ENCODE measurements at regions of chr2 and their contacts with region 1.

Region 1: GRCh38 chr2:7044261-7045250 is 127.3 kb downstream of the RNF144A start:
- DNase-seq: peak; percentile 16
- ATAC-seq: peak; percentile 84
- H3K4me3 ChIP-seq: no peak overlapping the region
- H3K27ac ChIP-seq: no peak overlapping the region
- H3K4me1 ChIP-seq: no peaks in the 10 kb centered on the region
- H3K27me3 ChIP-seq: no peaks in the 10 kb centered on the region
- CTCF ChIP-seq: peak; percentile 89 to 98 (median 98); a peak in 5 of 6 replicates
- EP300 ChIP-seq: no peak
- POLR2A ChIP-seq: no peak
- RAD21 ChIP-seq: peak; percentile 73

Region 2: GRCh38 chr2:6826081-6826913 is 218.3 kb before region 1 on chr2:
- CTCF ChIA-PET with region 1: interaction called, 13 read pairs
- POLR2A ChIA-PET with region 1: no interaction called
- RAD21 ChIA-PET with region 1: no interaction called
- SMC1A ChIA-PET with region 1: no interaction called
- in situ Hi-C with region 1: no loop called
- intact Hi-C with region 1: loop called (anchors 1 kb)
- DNase-seq: peak; percentile 58
- ATAC-seq: peak; percentile 97
- H3K4me3 ChIP-seq: no peak overlapping the region
- H3K27ac ChIP-seq: no peak overlapping the region
- H3K4me1 ChIP-seq: no peaks in the 10 kb centered on the region
- H3K27me3 ChIP-seq: no peaks in the 10 kb centered on the region
- CTCF ChIP-seq: peak; percentile 67 to 86 (median 70)
- EP300 ChIP-seq: peak in 1 of 2 experiments; percentile 19; a peak in 1 of 4 replicates
- POLR2A ChIP-seq: no peak
- RAD21 ChIP-seq: peak; percentile 74

Region 3: DNA sequence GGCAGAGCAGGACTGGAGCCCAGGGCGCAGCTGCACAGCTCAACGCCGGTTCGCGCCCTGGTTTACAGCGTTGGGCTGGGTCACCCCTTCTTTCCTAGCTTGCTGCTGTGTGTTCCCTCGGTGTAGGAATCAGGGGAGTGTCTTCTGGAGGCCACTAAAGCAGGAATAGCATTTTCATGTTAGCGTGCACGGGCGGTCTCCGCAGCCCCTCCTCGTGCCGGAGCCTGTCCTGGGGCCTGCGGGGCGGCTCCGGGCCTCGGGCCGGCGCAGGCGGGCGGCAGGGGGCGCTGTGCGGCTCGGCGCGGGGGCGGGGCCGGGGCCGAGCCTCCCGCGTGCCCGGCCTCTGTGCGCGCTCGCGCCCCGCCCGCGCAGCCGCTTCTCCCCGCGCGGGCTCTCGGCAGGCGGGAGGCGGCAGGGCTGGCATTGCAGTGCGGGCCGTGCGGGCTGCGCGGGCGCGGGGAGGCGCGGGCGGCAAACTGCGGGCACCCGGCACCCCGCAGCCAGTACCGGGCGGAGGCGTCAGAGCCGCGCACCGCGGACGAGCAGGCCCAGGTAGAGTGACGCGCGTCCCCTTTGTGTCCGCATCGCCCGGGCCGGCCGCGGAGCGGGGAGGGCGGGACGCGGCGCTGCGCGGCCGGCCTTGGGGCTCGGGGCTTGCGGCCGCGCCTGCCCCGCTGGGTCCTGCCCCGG is 127.3 kb before region 1 on chr2 and contains the start of gene RNF144A:
- CTCF ChIA-PET with region 1: interaction called, 25 read pairs
- POLR2A ChIA-PET with region 1: no interaction called
- RAD21 ChIA-PET with region 1: interaction called, 5 read pairs
- SMC1A ChIA-PET with region 1: interaction called, 5 read pairs
- in situ Hi-C with region 1: no loop called
- intact Hi-C with region 1: no loop called
- DNase-seq: no peak
- ATAC-seq: peak; percentile 87
- H3K4me3 ChIP-seq: peak within 1 kb of the TSS; percentile 78
- H3K27ac ChIP-seq: no peak within 1 kb of the TSS
- H3K4me1 ChIP-seq: peaks cover 10% of the 10 kb centered on the region; the same call in 1 of the 2 replicates
- H3K27me3 ChIP-seq: no peaks in the 10 kb centered on the region
- CTCF ChIP-seq: peak in 2 of 3 experiments; percentile 33 to 52; a peak in 3 of 6 replicates
- EP300 ChIP-seq: no peak
- POLR2A ChIP-seq: 0 out of 2 replicates have a peak, but pooled peaks have one; percentile 37
- RAD21 ChIP-seq: 0 out of 2 replicates have a peak, but pooled peaks have one; percentile 25
- polyA plus RNA-seq, gene RNF144A: 0.02 to 0.09 TPM

Region 4: GRCh38 chr2:7014174-7014640 is 30.3 kb before region 1 on chr2:
- CTCF ChIA-PET with region 1: interaction called, 36 read pairs
- POLR2A ChIA-PET with region 1: no interaction called
- RAD21 ChIA-PET with region 1: interaction called, 5 read pairs
- SMC1A ChIA-PET with region 1: interaction called, 12 read pairs
- in situ Hi-C with region 1: no loop called
- intact Hi-C with region 1: no loop called
- DNase-seq: no peak
- ATAC-seq: peak; percentile 86
- H3K4me3 ChIP-seq: no peak overlapping the region
- H3K27ac ChIP-seq: no peak overlapping the region
- H3K4me1 ChIP-seq: no peaks in the 10 kb centered on the region
- H3K27me3 ChIP-seq: no peaks in the 10 kb centered on the region; a peak in 1 of 4 replicates
- CTCF ChIP-seq: peak; percentile 37 to 61 (median 58); a peak in 5 of 6 replicates
- EP300 ChIP-seq: no peak
- POLR2A ChIP-seq: no peak
- RAD21 ChIP-seq: peak; percentile 42

Region 5: DNA sequence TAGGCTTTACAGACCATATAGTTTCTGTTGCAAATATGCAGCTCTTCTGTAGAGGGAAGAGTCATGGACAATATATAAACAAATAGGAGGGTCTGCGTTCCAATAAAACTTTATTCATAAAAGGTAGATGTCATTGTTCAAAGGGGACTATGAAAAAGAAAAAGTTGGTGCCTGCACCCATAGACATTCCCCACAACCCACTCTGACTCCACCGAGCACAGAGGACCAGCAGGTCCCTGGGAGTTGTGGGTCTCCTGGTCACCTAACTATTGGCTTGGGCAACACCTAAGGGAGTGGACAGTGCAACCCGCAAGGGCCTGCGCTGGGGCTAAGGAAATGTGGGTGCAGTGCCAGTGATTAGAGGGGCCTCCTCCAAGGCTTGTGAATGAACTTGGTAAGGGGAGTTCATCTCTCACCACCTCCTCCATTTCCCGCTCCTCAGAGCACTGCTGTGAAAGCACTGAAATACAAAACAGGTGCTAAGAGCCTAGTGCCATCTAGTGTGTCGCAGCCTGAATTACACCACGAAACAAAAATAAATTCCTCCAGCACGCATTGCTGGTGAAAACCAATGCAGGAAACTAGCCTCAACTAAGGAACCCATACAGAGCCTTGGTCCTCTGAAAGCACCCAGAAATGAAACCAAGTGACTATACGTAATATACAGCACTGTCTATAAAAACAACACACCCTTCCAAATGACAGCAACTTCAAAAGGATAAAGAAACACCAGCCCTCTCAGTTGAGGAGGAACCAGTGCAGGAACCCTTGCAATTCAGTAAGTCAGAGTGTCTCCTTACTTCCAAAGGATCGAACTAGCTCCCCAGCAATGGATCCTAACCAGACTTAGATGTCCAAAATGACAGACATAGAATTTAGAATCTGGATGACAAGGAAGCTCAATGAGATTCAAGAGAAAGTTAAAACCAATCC is 39.3 kb after region 1 on chr2:
- CTCF ChIA-PET with region 1: interaction called, 26 read pairs
- POLR2A ChIA-PET with region 1: no interaction called
- RAD21 ChIA-PET with region 1: no interaction called
- SMC1A ChIA-PET with region 1: interaction called, 12 read pairs
- in situ Hi-C with region 1: no loop called
- intact Hi-C with region 1: loop called (anchors 2 kb)
- DNase-seq: no peak
- ATAC-seq: peak; percentile 78
- H3K4me3 ChIP-seq: no peak overlapping the region
- H3K27ac ChIP-seq: no peak overlapping the region
- H3K4me1 ChIP-seq: no peaks in the 10 kb centered on the region
- H3K27me3 ChIP-seq: peaks cover 0 to 3% of the 10 kb centered on the region in 2 experiments; a peak in 1 of 4 replicates
- CTCF ChIP-seq: peak; percentile 47 to 67 (median 51)
- EP300 ChIP-seq: no peak
- POLR2A ChIP-seq: no peak
- RAD21 ChIP-seq: peak; percentile 68